ENCODE measurements at regions of chr10 and their contacts with region 1.

Region 1: GRCh38 chr10:11145495-11145855 is 127.8 kb downstream of the CELF2 start:
- DNase-seq: no peak
- ATAC-seq: peak; percentile 79
- H3K4me3 Mint-ChIP-seq: peak overlapping the region; percentile 80
- H3K27ac Mint-ChIP-seq: peak overlapping the region; percentile 97
- H3K4me1 Mint-ChIP-seq: peaks cover 92% of the 10 kb centered on the region
- H3K27me3 Mint-ChIP-seq: no peaks in the 10 kb centered on the region
- CTCF ChIP-seq: no peak

Region 2: DNA sequence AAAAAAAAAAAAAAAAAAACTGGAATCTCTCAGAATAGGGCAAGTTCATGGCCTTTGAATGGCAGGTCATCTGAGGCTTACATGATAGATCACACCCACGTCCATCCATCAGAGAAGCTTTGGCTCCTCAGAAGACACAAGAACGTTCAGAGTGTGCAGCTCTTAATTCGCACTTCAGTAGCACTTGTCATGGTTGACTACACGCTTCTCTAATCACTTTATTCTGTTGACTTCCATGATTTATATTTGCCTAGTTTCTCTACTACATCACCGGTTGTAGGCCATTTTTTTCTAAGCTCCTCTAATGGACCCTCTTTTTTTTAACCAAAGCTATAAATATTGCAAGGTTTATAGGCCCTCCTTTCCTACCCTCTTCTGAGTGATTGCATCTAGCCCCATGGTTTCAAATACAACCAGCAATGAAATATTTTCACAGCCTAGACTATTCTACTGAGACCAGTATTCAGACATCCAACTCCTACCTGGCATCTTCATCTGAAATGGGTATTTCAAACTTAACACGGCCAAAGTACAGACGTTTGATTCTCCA is 433.2 kb before region 1 on chr10:
- CTCF ChIA-PET with region 1: no interaction called
- POLR2A ChIA-PET with region 1: no interaction called
- intact Hi-C with region 1: no loop called
- DNase-seq: no peak
- ATAC-seq: no peak
- H3K4me3 Mint-ChIP-seq: no peak overlapping the region
- H3K27ac Mint-ChIP-seq: no peak overlapping the region
- H3K4me1 Mint-ChIP-seq: no peaks in the 10 kb centered on the region
- H3K27me3 Mint-ChIP-seq: no peaks in the 10 kb centered on the region
- CTCF ChIP-seq: no peak

Region 3: GRCh38 chr10:11097686-11098085 is 47.8 kb before region 1 on chr10:
- CTCF ChIA-PET with region 1: no interaction called
- POLR2A ChIA-PET with region 1: no interaction called
- intact Hi-C with region 1: loop called (anchors 10 kb)
- DNase-seq: no peak
- ATAC-seq: no peak
- H3K4me3 Mint-ChIP-seq: no peak overlapping the region
- H3K27ac Mint-ChIP-seq: no peak overlapping the region
- H3K4me1 Mint-ChIP-seq: peaks cover 8% of the 10 kb centered on the region
- H3K27me3 Mint-ChIP-seq: peaks cover 4% of the 10 kb centered on the region
- CTCF ChIP-seq: no peak

Region 4: GRCh38 chr10:11113156-11113555 is 32.3 kb before region 1 on chr10:
- CTCF ChIA-PET with region 1: interaction called, 10 read pairs
- POLR2A ChIA-PET with region 1: no interaction called
- intact Hi-C with region 1: loop called (anchors 5 kb)
- DNase-seq: no peak
- ATAC-seq: peak; percentile 73
- H3K4me3 Mint-ChIP-seq: no peak overlapping the region
- H3K27ac Mint-ChIP-seq: no peak overlapping the region
- H3K4me1 Mint-ChIP-seq: peaks cover 9% of the 10 kb centered on the region
- H3K27me3 Mint-ChIP-seq: no peaks in the 10 kb centered on the region
- CTCF ChIP-seq: no peak

Region 5: GRCh38 chr10:11178606-11179515 is 33.4 kb after region 1 on chr10:
- CTCF ChIA-PET with region 1: no interaction called
- POLR2A ChIA-PET with region 1: interaction called, 16 read pairs
- intact Hi-C with region 1: loop called (anchors 1 kb)
- DNase-seq: peak; percentile 43
- ATAC-seq: peak; percentile 75
- H3K4me3 Mint-ChIP-seq: peak overlapping the region; percentile 80
- H3K27ac Mint-ChIP-seq: peak overlapping the region; percentile 94
- H3K4me1 Mint-ChIP-seq: peaks cover 30% of the 10 kb centered on the region
- H3K27me3 Mint-ChIP-seq: no peaks in the 10 kb centered on the region
- CTCF ChIP-seq: no peak

Region 6: DNA sequence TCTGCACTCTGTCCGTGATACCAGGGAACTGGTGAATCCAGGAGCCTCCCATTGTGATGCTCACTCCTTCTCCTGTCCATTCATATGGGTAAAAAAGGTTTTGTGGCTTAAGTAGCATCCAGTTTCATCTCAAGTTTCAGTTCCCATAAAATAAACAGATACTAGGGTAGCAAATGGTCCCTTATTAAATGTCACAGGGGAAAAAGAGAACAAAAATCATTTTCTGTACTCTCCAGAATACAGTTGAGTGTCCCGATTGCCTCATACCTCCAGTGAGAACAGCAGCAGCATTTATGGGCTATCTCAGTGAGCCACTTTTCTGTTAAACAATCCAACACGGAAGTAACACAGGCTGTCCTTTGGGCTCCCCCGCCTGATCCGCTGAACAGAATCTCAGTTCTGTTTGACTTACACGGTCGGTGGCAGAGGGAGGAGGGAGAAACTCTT is 51.8 kb after region 1 on chr10:
- CTCF ChIA-PET with region 1: interaction called, 3 read pairs
- POLR2A ChIA-PET with region 1: no interaction called
- intact Hi-C with region 1: loop called (anchors 2 kb)
- DNase-seq: no peak
- ATAC-seq: peak; percentile 82
- H3K4me3 Mint-ChIP-seq: peak overlapping the region; percentile 81
- H3K27ac Mint-ChIP-seq: peak overlapping the region; percentile 94
- H3K4me1 Mint-ChIP-seq: peaks cover 97% of the 10 kb centered on the region
- H3K27me3 Mint-ChIP-seq: no peaks in the 10 kb centered on the region
- CTCF ChIP-seq: no peak

Measured in activated B cell treated with CpG ODN at 0.5 μM for 24 hours (primary cell).